ENCODE measurements at regions of chr3 and their contacts with region 1.

Region 1: GRCh38 chr3:190092250-190092649 is 28.4 kb downstream of the P3H2 start:
- DNase-seq: no peak
- H3K4me3 ChIP-seq: no peak overlapping the region
- H3K27me3 ChIP-seq: no peaks in the 10 kb centered on the region
- CTCF ChIP-seq: no peak

Region 2: DNA sequence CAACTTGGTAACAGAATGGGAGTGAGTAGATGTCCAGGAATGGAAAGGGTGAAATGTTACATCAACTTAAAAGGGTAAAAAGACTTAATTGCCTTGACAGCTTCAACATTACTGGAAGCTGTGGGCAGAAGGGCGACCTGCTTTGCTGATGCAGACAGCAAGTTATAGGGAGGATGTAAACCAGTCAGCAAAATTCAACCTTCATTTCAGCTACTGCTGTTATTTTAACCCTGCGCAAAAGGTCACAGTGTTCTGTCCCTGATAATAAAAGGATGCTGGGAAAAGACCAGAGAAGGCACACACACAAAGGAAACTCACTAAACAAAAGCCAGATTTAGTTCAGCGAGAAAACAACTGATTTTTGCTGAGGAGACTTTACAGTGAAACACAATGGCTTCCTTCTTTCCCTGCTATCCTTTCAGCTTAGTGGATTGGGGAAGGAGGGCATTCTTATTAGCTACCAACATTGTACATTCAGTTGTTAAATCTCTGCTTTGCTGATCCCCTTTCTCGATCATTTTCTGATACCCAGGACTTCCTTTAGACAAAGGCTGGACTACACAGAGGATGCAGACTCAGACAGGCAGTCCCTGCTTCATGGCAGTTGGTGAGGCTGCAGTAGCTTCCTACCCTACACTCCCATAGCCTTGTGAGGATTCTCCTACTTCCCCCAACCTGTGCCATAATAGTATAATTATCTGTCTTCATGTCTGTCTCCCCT is 33.6 kb before region 1 on chr3:
- CTCF ChIA-PET with region 1: no interaction called
- POLR2A ChIA-PET with region 1: no interaction called
- DNase-seq: no peak
- H3K4me3 ChIP-seq: no peak overlapping the region
- H3K27me3 ChIP-seq: no peaks in the 10 kb centered on the region
- CTCF ChIP-seq: no peak

Region 3: GRCh38 chr3:190076601-190077396 is 15.5 kb before region 1 on chr3:
- CTCF ChIA-PET with region 1: interaction called, 3 read pairs
- POLR2A ChIA-PET with region 1: interaction called, 10 read pairs
- DNase-seq: peak; percentile 96
- H3K4me3 ChIP-seq: no peak overlapping the region
- H3K27me3 ChIP-seq: no peaks in the 10 kb centered on the region
- CTCF ChIP-seq: no peak

Region 4: GRCh38 chr3:190120269-190121060 is 28.2 kb after region 1 on chr3 and contains the start of gene P3H2:
- CTCF ChIA-PET with region 1: interaction called, 10 read pairs
- POLR2A ChIA-PET with region 1: no interaction called
- DNase-seq: no peak
- H3K4me3 ChIP-seq: peak within 1 kb of the TSS; percentile 81
- H3K27me3 ChIP-seq: no peaks in the 10 kb centered on the region
- CTCF ChIP-seq: peak; percentile 76
- polyA plus RNA-seq, gene P3H2: 13.5 and 24.1 TPM in 2 replicates